ENCODE measurements at regions of chr5 and their contacts with region 1.

Region 1: GRCh38 chr5:170782438-170782837 is 1.1 kb upstream of the GABRP start:
- DNase-seq: no peak
- H3K4me3 ChIP-seq: no peak overlapping the region
- H3K27ac ChIP-seq: no peak overlapping the region
- H3K4me1 ChIP-seq: no peaks in the 10 kb centered on the region
- H3K27me3 ChIP-seq: no peaks in the 10 kb centered on the region
- CTCF ChIP-seq: no peak

Region 2: GRCh38 chr5:170755679-170756456 is 26.6 kb before region 1 on chr5:
- intact Hi-C with region 1: loop called (anchors 2 kb)
- DNase-seq: no peak
- H3K4me3 ChIP-seq: no peak overlapping the region
- H3K27ac ChIP-seq: peak overlapping the region; percentile 49 to 65
- H3K4me1 ChIP-seq: peaks cover 0 to 27% (median 17%) of the 10 kb centered on the region in 4 donors
- H3K27me3 ChIP-seq: peaks cover 0 to 7% of the 10 kb centered on the region in 2 donors
- CTCF ChIP-seq: no peak